Activated B cell treated with CpG ODN at 0.5 μM for 24 hours (primary cell): ENCODE measurements at regions of chr3 and their contacts with region 1.

Region 1: DNA sequence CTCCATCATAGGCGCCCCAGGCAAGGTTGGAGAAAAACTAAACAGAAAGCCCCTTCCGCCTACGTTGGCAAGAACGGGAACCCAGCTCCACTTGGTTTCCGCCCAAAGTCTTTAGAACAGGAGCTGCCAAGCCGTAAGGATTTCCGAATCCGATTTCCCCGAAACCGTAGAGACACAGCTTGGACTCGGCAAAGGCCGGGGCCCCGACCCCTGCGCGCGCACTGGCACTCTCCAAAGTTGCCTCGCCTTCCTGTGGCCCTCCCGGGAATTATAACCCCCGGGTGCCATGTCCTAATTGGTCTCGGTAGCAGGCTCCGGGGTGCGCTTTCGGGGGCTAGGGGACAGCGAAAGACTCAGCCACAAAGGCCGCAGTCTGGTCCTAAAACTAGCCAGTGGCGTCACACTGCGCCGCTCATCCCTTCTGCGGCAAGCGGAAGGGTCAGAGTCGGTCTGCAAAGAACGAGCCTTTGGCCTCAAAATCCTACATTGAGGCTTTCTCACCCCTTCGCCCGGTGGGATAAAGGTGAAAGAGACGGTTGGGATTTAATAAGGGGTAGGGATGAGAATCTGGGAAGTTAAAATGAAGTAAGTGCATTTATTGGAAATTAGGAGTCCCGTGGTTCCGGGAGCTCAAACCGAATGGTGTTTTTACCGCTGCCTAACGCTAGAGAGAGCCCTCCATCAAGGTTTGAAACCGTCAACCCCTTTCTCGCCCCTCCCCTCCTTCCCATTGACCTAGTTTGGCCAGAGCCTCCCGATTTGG is 6.8 kb downstream of the BCL6 start:
- DNase-seq: peak; percentile 33
- ATAC-seq: peak; percentile 41
- H3K4me3 Mint-ChIP-seq: peak overlapping the region; percentile 98
- H3K27ac Mint-ChIP-seq: peak overlapping the region; percentile 81
- H3K4me1 Mint-ChIP-seq: peaks cover 61% of the 10 kb centered on the region
- H3K27me3 Mint-ChIP-seq: no peaks in the 10 kb centered on the region
- CTCF ChIP-seq: no peak

Region 2: DNA sequence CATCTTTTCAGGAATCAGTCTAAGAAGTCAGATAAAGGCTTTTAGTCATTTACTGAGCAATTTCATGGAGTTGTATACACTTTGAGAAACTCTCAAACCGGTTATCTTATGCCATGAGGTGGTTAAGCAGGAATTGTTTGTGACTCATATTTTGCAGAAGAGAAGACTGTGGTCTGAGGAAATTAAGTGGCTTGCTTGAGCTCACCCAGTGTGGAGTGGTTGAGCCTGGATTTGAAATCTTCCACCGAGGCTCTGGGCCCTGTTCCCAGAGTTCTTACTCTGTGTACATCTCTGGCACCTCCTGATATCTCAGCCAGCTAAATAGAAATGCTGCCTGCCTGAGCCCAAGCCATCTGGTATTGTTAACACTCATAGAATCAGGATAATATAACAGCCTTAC is 44.6 kb after region 1 on chr3:
- CTCF ChIA-PET with region 1: no interaction called
- POLR2A ChIA-PET with region 1: no interaction called
- intact Hi-C with region 1: no loop called
- DNase-seq: no peak
- ATAC-seq: no peak
- H3K4me3 Mint-ChIP-seq: no peak overlapping the region
- H3K27ac Mint-ChIP-seq: no peak overlapping the region
- H3K4me1 Mint-ChIP-seq: peaks cover 3% of the 10 kb centered on the region
- H3K27me3 Mint-ChIP-seq: no peaks in the 10 kb centered on the region
- CTCF ChIP-seq: no peak

Region 3: DNA sequence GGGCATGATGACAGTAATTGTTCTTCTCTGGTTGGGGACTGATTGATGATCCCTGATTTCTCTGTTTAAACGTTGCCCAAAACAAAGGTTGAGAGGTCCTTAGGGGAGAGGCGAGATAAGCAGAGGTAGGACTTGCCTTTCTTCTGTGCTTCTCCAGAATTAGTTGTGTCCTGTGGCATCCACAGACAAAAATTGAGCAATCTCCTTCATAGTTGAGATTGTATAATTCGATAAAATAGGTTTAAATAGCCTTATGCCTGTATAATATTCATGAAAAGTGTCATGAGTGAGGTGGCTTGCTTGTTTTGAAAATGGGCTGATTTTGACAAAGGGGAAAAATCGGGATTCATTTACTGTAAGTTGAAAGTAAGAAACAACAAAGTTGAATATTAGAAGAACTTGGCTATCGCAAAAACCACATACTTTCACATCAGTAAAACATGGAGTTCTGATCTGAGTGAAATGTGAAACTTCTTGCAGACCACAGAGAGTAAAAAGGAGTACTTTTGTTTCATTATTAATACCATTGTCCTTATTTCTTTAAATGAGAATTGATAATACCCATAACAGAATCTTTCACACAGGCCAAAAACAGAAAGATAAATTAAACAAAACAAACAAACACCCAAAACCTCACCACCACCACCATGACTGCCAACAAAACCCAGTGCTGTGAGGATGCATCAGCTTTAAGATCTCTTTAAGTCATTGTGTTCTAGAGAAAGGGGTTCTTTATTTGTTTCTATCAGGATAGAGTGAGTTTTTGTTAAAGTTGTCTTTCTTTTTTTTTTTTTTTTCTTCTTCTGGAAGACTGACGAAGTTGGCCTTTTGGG is 571.1 kb after region 1 on chr3:
- CTCF ChIA-PET with region 1: interaction called, 10 read pairs
- POLR2A ChIA-PET with region 1: interaction called, 15 read pairs
- intact Hi-C with region 1: no loop called
- DNase-seq: no peak
- ATAC-seq: peak; percentile 78
- H3K4me3 Mint-ChIP-seq: peak overlapping the region; percentile 72
- H3K27ac Mint-ChIP-seq: peak overlapping the region; percentile 91
- H3K4me1 Mint-ChIP-seq: peaks cover 39% of the 10 kb centered on the region
- H3K27me3 Mint-ChIP-seq: no peaks in the 10 kb centered on the region
- CTCF ChIP-seq: no peak

Region 4: GRCh38 chr3:188421836-188422540 is 683.5 kb after region 1 on chr3:
- CTCF ChIA-PET with region 1: interaction called, 13 read pairs
- POLR2A ChIA-PET with region 1: interaction called, 37 read pairs
- intact Hi-C with region 1: loop called (anchors 1 kb)
- DNase-seq: no peak
- ATAC-seq: peak; percentile 95
- H3K4me3 Mint-ChIP-seq: peak overlapping the region; percentile 69
- H3K27ac Mint-ChIP-seq: peak overlapping the region; percentile 98
- H3K4me1 Mint-ChIP-seq: peaks cover 90% of the 10 kb centered on the region
- H3K27me3 Mint-ChIP-seq: no peaks in the 10 kb centered on the region
- CTCF ChIP-seq: no peak

Region 5: DNA sequence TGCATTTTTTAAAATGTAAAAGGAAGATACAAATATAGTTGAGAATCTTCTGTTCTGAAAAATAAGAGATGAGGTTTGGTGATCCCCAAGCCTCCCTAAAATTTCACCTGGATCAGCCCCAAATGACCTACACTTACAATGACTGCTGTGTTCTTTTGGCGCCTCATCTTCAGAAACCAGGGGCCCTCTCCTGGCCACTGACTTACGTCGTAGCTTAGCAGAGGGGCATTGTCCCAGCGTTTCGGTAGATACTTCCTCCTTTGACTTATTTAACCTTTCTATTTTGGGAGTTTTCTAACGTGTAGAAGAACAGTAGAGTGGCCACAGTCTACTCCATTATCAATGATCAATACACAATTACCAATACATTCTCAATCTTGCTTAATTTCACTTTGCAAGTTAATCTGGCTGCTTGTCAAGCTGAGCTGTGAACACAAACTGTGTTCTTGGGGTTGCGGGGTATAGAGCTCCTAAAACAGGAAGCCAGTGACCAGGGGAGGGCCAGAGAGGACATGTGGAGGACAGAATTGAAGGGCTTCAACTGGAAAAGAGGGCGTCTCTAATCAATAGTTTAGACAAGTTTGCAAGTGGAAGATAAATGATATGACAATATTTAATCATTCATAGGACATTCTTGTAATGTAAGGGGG is 834.9 kb after region 1 on chr3:
- CTCF ChIA-PET with region 1: interaction called, 22 read pairs
- POLR2A ChIA-PET with region 1: interaction called, 10 read pairs
- intact Hi-C with region 1: no loop called
- DNase-seq: no peak
- ATAC-seq: peak; percentile 71
- H3K4me3 Mint-ChIP-seq: peak overlapping the region; percentile 39
- H3K27ac Mint-ChIP-seq: peak overlapping the region; percentile 82
- H3K4me1 Mint-ChIP-seq: peaks cover 32% of the 10 kb centered on the region
- H3K27me3 Mint-ChIP-seq: no peaks in the 10 kb centered on the region
- CTCF ChIP-seq: no peak

Region 6: GRCh38 chr3:188749010-188749617 is 1010.6 kb after region 1 on chr3:
- CTCF ChIA-PET with region 1: interaction called, 45 read pairs
- POLR2A ChIA-PET with region 1: interaction called, 94 read pairs
- intact Hi-C with region 1: loop called (anchors 1 kb)
- DNase-seq: no peak
- ATAC-seq: no peak
- H3K4me3 Mint-ChIP-seq: no peak overlapping the region
- H3K27ac Mint-ChIP-seq: peak overlapping the region; percentile 55
- H3K4me1 Mint-ChIP-seq: peaks cover 43% of the 10 kb centered on the region
- H3K27me3 Mint-ChIP-seq: no peaks in the 10 kb centered on the region
- CTCF ChIP-seq: no peak

Region 7: DNA sequence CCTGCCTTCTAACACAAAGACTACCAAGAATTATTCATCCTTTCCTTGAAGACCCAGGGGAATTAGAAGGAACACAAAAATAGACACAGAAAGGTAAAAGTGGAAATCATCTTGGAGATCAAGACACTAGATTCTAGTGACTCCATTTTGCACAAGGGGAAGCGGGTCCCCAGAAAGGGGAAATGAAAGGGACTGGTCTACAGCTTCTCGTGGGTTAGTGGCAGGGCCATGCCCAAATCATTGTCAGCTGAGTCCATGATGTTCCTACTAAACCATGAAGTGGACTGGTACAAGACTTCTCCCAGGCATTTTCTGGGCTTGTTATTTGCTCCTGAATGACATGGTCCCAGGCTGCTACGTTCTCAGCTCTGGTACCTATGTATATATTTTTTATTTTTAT is 1202.6 kb after region 1 on chr3:
- CTCF ChIA-PET with region 1: interaction called, 31 read pairs
- POLR2A ChIA-PET with region 1: interaction called, 3 read pairs
- intact Hi-C with region 1: no loop called
- DNase-seq: no peak
- ATAC-seq: peak; percentile 99
- H3K4me3 Mint-ChIP-seq: no peak overlapping the region
- H3K27ac Mint-ChIP-seq: no peak overlapping the region
- H3K4me1 Mint-ChIP-seq: peaks cover 13% of the 10 kb centered on the region
- H3K27me3 Mint-ChIP-seq: no peaks in the 10 kb centered on the region
- CTCF ChIP-seq: no peak

Region 8: GRCh38 chr3:189233225-189233858 is 1494.8 kb after region 1 on chr3:
- CTCF ChIA-PET with region 1: no interaction called
- POLR2A ChIA-PET with region 1: no interaction called
- intact Hi-C with region 1: loop called (anchors 10 kb)
- DNase-seq: no peak
- ATAC-seq: no peak
- H3K4me3 Mint-ChIP-seq: no peak overlapping the region
- H3K27ac Mint-ChIP-seq: no peak overlapping the region
- H3K4me1 Mint-ChIP-seq: peaks cover 2% of the 10 kb centered on the region
- H3K27me3 Mint-ChIP-seq: peaks cover 6% of the 10 kb centered on the region
- CTCF ChIP-seq: no peak